Activated CD4-positive, alpha-beta memory T cell treated with anti-CD3 and anti-CD28 coated beads for 36 hours (primary cell): ENCODE measurements at regions of chr9 and their contacts with region 1.

Region 1: GRCh38 chr9:97598461-97599288 is 34.5 kb downstream of the TSTD2 start:
- DNase-seq: peak; percentile 77
- H3K4me3 Mint-ChIP-seq: no peak overlapping the region
- H3K27ac Mint-ChIP-seq: no peak overlapping the region
- H3K4me1 Mint-ChIP-seq: peaks cover 6% of the 10 kb centered on the region
- H3K27me3 Mint-ChIP-seq: no peaks in the 10 kb centered on the region

Region 2: DNA sequence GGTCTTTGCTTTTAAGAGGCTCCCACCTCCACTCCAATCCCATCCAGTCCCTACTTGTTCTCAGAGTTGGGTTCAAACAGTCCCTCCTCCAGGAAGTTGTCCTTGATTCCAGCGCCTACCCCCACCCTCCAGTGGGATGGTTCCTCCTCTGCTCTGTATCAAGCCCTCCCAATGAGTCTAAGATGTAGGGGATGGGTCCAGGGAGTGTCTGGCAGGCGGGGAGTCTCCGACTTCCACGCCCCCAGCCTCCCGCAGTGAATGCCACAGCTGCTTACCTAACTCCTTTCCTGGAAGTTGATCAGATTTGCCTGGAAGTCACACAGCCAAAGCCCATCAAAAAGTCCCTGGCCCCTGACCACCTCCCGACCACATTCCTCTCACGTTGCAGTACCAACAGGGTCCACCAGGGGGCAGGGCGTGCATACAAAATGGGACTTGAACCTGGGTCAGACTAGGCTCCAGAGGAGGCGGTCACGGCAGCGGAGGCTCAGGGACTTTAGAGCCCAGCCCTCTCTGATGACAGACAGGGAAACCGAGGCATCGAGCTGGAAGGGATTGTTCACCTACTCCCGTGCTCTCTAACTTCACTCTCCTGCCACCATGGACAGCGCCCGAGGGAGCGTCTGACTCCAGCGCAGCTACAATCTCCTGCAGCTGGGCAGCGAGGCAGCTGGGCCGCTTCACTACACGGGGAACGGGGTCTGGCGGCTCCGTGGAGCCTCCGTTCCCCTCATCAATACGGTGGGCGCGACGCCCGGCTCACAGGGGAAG is 211.8 kb before region 1 on chr9:
- CTCF ChIA-PET with region 1: interaction called, 36 read pairs
- POLR2A ChIA-PET with region 1: no interaction called
- intact Hi-C with region 1: loop called (anchors 5 kb)
- DNase-seq: peak; percentile 87
- H3K4me3 Mint-ChIP-seq: no peak overlapping the region
- H3K27ac Mint-ChIP-seq: no peak overlapping the region
- H3K4me1 Mint-ChIP-seq: peaks cover 16% of the 10 kb centered on the region
- H3K27me3 Mint-ChIP-seq: peaks cover 19% of the 10 kb centered on the region

Region 3: DNA sequence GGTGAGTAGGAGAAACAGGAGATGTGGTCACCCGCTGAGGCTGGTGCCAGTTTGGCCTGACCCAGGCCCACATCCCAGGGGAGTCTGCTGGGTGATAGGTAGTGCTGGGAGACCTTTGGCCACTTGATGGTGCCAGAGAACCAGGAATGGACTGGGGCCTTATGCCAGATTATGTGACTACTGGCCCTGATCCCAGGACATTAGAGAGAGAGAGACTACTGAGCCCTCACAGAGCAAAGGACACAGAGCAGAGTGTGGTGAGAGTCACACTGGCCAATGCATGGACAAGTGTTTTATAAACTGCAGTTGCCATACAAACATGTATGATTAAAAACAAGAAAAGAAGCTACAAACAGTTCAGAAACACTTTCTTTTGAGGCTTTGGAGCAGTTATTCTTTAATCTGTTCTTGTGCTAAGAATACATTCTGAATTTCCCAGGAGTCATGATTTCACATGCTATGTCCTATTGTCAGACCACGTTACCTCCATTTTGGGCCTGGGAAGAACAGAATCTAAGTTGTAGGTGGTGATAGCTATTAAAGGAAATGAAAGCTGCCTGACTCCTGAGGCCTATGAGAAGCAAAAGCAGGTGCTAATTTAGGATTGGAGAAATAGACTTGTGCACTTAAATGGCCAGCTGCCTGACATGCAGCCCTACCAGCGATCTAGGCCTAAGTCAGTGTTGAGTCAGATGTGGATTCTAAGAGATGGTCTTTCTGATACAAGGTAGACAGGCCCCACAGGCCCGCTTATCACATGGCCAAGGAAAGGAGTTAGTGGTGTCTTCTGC is 129.8 kb before region 1 on chr9:
- CTCF ChIA-PET with region 1: interaction called, 225 read pairs
- POLR2A ChIA-PET with region 1: interaction called, 3 read pairs
- intact Hi-C with region 1: loop called (anchors 1 kb)
- DNase-seq: peak; percentile 63
- H3K4me3 Mint-ChIP-seq: no peak overlapping the region
- H3K27ac Mint-ChIP-seq: no peak overlapping the region
- H3K4me1 Mint-ChIP-seq: no peaks in the 10 kb centered on the region
- H3K27me3 Mint-ChIP-seq: no peaks in the 10 kb centered on the region

Region 4: DNA sequence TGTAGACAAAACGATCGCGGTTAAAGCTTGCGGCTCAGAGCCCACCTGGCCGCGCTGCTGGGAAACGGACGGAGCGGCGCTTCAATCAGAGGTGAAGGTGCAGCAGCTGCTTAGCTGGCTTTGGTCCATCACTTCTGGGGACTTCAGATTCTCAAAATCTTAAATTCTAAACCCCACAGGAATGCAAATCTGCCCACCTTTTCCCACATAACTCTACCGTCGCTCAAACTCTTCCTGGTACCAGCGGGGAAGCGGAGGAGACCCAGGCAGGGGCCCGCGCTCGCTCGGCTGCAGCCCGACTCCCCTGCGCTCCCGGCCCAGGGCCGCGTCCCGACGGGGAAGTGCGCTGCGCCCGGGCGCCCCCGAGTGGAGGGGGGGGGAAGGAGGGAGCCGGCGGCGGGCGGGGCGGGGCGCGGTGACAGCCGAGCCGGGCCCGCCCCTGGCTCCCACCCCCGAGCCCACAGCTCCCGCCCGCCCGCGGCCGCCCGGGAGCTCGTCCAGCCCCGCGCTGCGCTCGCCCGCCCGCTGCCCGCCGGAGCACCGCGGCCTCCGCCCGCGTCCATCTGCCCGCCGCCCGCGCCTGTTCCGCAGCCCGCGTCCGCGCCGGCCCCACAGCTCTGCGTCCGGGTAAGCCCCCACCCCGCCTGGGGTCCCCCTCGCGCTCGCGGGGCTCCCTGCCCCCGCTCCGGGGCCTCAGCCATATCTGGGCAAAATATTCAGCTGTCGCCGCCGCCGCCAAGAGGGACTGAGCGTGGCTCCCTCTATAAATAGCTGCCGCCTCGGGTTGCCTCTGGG is 97.3 kb before region 1 on chr9 and contains the start of gene TMOD1:
- CTCF ChIA-PET with region 1: interaction called, 18 read pairs
- POLR2A ChIA-PET with region 1: no interaction called
- intact Hi-C with region 1: loop called (anchors 10 kb)
- DNase-seq: peak; percentile 56
- H3K4me3 Mint-ChIP-seq: peak within 1 kb of the TSS; percentile 65
- H3K27ac Mint-ChIP-seq: no peak within 1 kb of the TSS
- H3K4me1 Mint-ChIP-seq: peaks cover 15% of the 10 kb centered on the region
- H3K27me3 Mint-ChIP-seq: peaks cover 42% of the 10 kb centered on the region
- total RNA-seq, gene TMOD1: 1.7 to 2.5 TPM

Region 5: DNA sequence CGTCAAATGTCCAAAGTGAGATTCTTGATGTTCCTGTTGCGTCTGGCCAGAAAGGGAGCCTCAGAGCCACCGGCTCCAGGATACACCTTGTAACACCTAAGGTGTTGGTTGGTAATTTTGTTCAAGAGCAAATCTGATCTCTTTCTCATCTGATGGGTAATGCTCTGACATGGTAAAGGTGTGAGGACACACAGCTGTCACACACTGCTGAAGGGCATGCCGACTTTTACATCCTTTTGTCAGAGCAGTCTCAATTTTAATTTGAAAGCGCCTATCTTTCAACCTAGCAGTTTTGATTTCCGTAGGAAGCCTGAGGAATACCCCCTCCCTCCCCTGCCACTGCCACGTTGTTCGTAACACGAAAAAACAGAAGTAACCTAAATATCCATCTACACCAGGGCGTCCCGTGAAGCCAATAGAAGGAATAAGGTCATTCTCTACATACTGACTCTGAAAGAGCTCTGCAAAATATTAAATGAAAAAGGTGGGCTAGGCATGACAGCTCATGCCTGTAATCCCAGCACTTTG is 22.9 kb before region 1 on chr9:
- CTCF ChIA-PET with region 1: interaction called, 13 read pairs
- POLR2A ChIA-PET with region 1: no interaction called
- intact Hi-C with region 1: no loop called
- DNase-seq: no peak
- H3K4me3 Mint-ChIP-seq: peak overlapping the region; percentile 80
- H3K27ac Mint-ChIP-seq: no peak overlapping the region
- H3K4me1 Mint-ChIP-seq: peaks cover 17% of the 10 kb centered on the region
- H3K27me3 Mint-ChIP-seq: peaks cover 2% of the 10 kb centered on the region